ENCODE measurements at regions of chr2 and their contacts with region 1.

Region 1: GRCh38 chr2:74567881-74568280 is 13.4 kb downstream of the DOK1 start:
- DNase-seq: peak; percentile 82
- H3K4me3 ChIP-seq: no peak overlapping the region
- H3K27ac ChIP-seq: peak overlapping the region; percentile 82
- H3K4me1 ChIP-seq: peaks cover 56% of the 10 kb centered on the region
- H3K27me3 ChIP-seq: no peaks in the 10 kb centered on the region
- CTCF ChIP-seq: no peak

Region 2: GRCh38 chr2:74548900-74549826 is 18.7 kb before region 1 on chr2:
- CTCF ChIA-PET with region 1: no interaction called
- dilution Hi-C with region 1: no loop called
- in situ Hi-C with region 1: no loop called
- intact Hi-C with region 1: loop called (anchors 2 kb)
- DNase-seq: peak; percentile 57
- H3K4me3 ChIP-seq: peak overlapping the region; percentile 68 to 82 (median 76)
- H3K27ac ChIP-seq: peak overlapping the region; percentile 33
- H3K4me1 ChIP-seq: peaks cover 18% of the 10 kb centered on the region
- H3K27me3 ChIP-seq: no peaks in the 10 kb centered on the region
- CTCF ChIP-seq: no peak